ENCODE measurements at regions of chr11 and their contacts with region 1.

Region 1: GRCh38 chr11:68383976-68384501 is 71.6 kb downstream of the LRP5 start:
- DNase-seq: peak; percentile 60 to 62
- ATAC-seq: peak in 1 of 2 experiments; percentile 5; a peak in 2 of 6 replicates
- H3K4me3 ChIP-seq: no peak overlapping the region
- H3K27ac ChIP-seq: peak overlapping the region in 1 of 2 experiments; percentile 44; a peak in 2 of 6 replicates
- H3K4me1 ChIP-seq: peaks cover 43% of the 10 kb centered on the region
- CTCF ChIP-seq: peak; percentile 95
- EP300 ChIP-seq: no peak
- POLR2A ChIP-seq: no peak
- RAD21 ChIP-seq: peak; percentile 94 to 95

Region 2: DNA sequence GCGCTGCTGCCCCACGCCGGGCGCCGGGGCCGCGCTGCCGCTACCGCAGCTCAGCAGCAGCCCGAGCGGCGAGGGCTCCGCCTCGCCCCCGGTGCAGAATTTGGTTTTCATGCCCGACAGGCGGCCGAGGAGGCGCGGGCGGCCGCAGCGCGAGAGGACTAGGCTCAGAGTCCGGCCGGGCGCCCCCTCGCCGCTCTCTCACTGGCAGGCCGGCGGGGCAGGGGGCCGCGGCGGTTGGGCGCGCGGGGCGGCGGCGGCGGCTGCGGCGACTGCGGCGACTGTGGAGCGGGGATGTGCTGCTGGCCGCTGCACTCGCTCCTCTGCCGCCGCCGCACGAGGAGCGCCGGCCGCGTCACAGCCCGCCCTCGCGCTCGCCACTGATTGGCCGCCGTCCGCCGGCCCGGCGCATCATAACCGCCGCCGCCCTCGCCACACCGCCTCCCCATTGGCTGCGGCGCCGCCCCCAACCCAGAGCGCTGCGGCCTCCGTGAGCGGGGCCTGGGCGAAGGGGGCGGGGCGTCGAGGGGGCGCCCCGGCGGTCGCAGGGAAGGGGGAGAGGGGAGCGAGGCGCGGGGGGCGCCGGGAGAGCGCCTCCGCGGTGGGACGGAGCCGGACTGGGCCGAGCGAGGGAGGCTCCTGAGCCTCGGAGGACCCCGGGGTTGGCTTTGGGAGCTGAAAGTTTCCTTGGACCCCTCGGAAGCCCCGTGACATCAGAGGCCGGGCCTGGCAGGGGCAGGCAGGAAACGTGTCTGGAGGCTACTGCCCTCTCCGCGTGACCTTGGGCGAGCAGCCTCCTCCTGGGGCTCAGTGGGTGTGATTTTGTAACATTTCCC is 262.8 kb before region 1 on chr11 and contains the start of gene CHKA:
- CTCF ChIA-PET with region 1: no interaction called
- POLR2A ChIA-PET with region 1: no interaction called
- DNase-seq: peak; percentile 84 to 91
- ATAC-seq: peak; percentile 93 to 96
- H3K4me3 ChIP-seq: peak within 1 kb of the TSS; percentile 99
- H3K27ac ChIP-seq: peak within 1 kb of the TSS; percentile 86 to 90
- H3K4me1 ChIP-seq: peaks cover 40% of the 10 kb centered on the region
- CTCF ChIP-seq: no peak
- EP300 ChIP-seq: no peak
- POLR2A ChIP-seq: peak; percentile 71; the same call in 1 of the 2 replicates
- RAD21 ChIP-seq: no peak
- polyA plus RNA-seq, gene CHKA: 19.4 and 21.7 TPM in 2 replicates

Region 3: DNA sequence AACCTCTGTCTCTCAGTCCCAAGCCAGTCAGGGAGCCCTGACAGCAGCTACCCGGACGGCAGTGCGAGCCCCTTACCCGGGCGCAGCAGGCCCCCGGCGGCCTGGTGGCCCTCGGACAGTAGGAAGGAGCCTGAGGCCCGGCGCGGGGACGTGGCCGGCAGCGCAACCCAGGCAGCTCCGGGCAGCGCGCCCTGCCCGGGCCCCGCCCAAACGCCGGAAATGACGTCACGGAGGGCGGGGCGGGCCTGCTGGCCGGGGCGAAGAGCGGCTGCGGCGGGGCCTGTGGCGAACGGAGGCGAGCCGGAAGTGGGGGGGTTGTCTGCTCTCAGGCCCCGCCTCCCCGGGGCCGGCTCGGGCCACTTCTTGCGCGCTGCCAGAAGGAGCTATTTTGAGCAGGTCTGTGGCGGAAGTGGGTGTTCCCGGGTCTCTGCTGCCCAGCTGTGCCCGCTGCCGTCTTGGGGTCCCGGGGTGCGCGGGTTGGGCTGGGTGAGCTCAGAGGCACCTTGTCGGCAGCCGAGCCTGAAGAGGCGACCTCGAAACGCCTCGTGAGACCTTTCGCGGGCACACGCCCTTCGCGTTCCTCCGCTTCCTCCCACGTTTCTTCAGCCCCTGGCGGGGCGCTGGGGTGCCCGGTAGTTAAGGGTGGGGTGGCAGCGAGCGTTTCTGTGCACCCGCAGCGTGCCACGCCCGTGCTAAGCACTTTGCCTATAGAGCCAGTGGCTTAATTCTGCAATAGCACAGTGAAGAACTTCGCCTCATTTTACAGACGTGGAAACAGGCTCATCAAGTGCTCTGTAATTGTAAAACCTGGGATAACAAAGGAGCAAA is 112.0 kb before region 1 on chr11 and contains the start of gene C11orf24:
- CTCF ChIA-PET with region 1: interaction called, 30 read pairs
- POLR2A ChIA-PET with region 1: interaction called, 5 read pairs
- DNase-seq: peak; percentile 95 to 96
- ATAC-seq: peak; percentile 91 to 96
- H3K4me3 ChIP-seq: peak within 1 kb of the TSS; percentile 87
- H3K27ac ChIP-seq: peak within 1 kb of the TSS; percentile 97 to 98
- H3K4me1 ChIP-seq: peaks cover 33% of the 10 kb centered on the region
- CTCF ChIP-seq: no peak
- EP300 ChIP-seq: no peak
- POLR2A ChIP-seq: peak; percentile 85
- RAD21 ChIP-seq: no peak
- polyA plus RNA-seq, gene C11orf24: 29.4 and 30.6 TPM in 2 replicates

Region 4: DNA sequence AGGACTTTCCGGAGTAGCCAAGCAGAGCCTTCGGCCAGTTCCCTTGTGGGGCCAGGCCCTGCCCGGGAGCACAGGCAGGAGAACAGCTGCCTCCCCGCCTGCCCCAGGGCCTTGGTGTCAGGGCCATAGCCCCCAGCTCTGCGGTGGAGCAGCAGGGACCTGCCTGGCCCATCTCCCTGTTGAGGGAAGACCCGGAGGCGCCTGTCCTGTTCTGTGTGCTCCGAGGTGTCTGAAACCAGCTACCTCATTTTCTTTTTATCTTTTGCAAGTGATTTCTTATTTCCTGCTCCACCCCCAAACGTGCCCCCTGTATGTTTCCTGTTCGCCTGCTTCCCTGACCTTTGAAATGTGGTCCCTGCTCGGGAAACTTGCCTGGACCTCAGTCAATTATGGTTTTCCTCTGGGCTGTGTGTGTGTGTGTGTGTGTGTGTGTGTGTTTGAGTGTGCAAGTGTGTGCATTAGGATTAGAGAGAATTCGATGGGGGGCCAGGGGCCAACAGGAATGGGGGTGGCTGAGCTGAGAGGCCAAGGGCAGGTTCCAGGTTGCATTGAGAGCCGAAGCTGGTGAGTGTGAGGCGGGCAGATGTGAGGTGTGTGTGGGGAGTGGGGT is 52.6 kb before region 1 on chr11:
- CTCF ChIA-PET with region 1: interaction called, 28 read pairs
- POLR2A ChIA-PET with region 1: no interaction called
- DNase-seq: no peak
- ATAC-seq: no peak
- H3K4me3 ChIP-seq: no peak overlapping the region
- H3K27ac ChIP-seq: peak overlapping the region in 1 of 2 experiments; percentile 26; a peak in 1 of 6 replicates
- H3K4me1 ChIP-seq: peaks cover 11% of the 10 kb centered on the region; the same call in 2 of the 3 replicates
- CTCF ChIP-seq: no peak
- EP300 ChIP-seq: no peak
- POLR2A ChIP-seq: no peak
- RAD21 ChIP-seq: no peak

Region 5: GRCh38 chr11:68370211-68371111 is 13.6 kb before region 1 on chr11:
- CTCF ChIA-PET with region 1: interaction called, 39 read pairs
- POLR2A ChIA-PET with region 1: no interaction called
- DNase-seq: no peak
- ATAC-seq: no peak
- H3K4me3 ChIP-seq: no peak overlapping the region
- H3K27ac ChIP-seq: no peak overlapping the region
- H3K4me1 ChIP-seq: peaks cover 4% of the 10 kb centered on the region; the same call in 1 of the 3 replicates
- CTCF ChIP-seq: no peak
- EP300 ChIP-seq: no peak
- POLR2A ChIP-seq: no peak
- RAD21 ChIP-seq: no peak

Region 6: GRCh38 chr11:68412593-68413475 is 28.8 kb after region 1 on chr11:
- CTCF ChIA-PET with region 1: interaction called, 15 read pairs
- POLR2A ChIA-PET with region 1: no interaction called
- DNase-seq: no peak
- ATAC-seq: no peak
- H3K4me3 ChIP-seq: no peak overlapping the region
- H3K27ac ChIP-seq: no peak overlapping the region
- H3K4me1 ChIP-seq: no peaks in the 10 kb centered on the region
- CTCF ChIP-seq: no peak
- EP300 ChIP-seq: no peak
- POLR2A ChIP-seq: no peak
- RAD21 ChIP-seq: no peak

Region 7: GRCh38 chr11:68506908-68507307 is 122.9 kb after region 1 on chr11:
- CTCF ChIA-PET with region 1: no interaction called
- POLR2A ChIA-PET with region 1: no interaction called
- DNase-seq: peak in 1 of 2 experiments; percentile 22
- ATAC-seq: peak in 1 of 2 experiments; percentile 60; a peak in 2 of 6 replicates
- H3K4me3 ChIP-seq: no peak overlapping the region
- H3K27ac ChIP-seq: no peak overlapping the region
- H3K4me1 ChIP-seq: peaks cover 16% of the 10 kb centered on the region
- CTCF ChIP-seq: no peak
- EP300 ChIP-seq: no peak
- POLR2A ChIP-seq: no peak
- RAD21 ChIP-seq: no peak